ENCODE measurements at regions of chr1 and their contacts with region 1.

Region 1: GRCh38 chr1:46527474-46528296 is 23.8 kb downstream of the KNCN start:
- DNase-seq: peak; percentile 63 to 79 (median 72)
- H3K4me3 ChIP-seq: no peak overlapping the region
- H3K27ac ChIP-seq: no peak overlapping the region
- H3K4me1 ChIP-seq: peaks cover 0 to 8% (median 3%) of the 10 kb centered on the region in 4 experiments
- H3K27me3 ChIP-seq: peaks cover 0 to 60% (median 49%) of the 10 kb centered on the region in 5 experiments

Region 2: GRCh38 chr1:46442317-46443161 is 85.1 kb before region 1 on chr1:
- CTCF ChIA-PET with region 1: interaction called, 161 read pairs
- POLR2A ChIA-PET with region 1: no interaction called
- DNase-seq: peak; percentile 84 to 90 (median 89)
- H3K4me3 ChIP-seq: peak overlapping the region; percentile 33 to 86 (median 64)
- H3K27ac ChIP-seq: peak overlapping the region in 1 of 2 experiments; percentile 62
- H3K4me1 ChIP-seq: peaks cover 0 to 21% (median 12%) of the 10 kb centered on the region in 4 experiments
- H3K27me3 ChIP-seq: peaks cover 2 to 23% (median 12%) of the 10 kb centered on the region in 5 experiments

Region 3: DNA sequence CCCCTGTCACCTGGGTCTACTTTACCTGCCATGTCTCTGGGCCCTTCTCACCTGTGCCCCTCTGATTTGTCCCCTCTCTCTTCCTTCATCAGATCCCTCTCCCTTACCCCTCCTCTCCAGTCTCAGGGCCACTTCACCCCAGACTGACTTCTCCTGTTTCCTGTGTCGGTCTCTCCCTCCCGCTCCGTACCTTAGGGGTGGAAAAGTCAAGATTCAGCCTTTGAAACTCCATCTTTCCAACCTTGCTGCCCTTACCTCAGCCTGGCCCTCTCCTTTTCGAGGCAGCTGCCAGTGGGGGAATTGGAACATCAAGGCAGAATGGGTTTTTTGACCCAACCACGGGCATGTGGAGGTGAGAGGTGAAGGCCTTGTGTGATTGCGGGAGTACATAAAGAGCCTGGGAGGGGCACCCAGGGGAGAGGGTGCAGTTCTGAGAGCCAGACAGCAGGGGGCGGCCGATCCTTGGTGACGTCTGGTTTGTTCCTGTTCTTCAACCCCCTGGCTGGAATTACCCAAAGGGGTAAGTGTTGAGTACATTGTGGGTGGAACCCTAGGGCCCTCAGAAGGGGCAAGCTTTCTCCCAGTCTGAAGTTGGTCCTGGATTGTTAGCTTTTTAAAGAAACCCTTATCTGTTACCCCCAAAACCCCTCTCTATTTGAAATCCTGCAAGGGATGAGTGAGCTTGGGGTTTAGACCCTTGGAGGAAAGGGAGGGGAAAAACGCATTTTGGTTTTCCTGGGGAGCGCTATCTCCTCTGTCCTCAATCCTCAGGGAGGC is 50.3 kb before region 1 on chr1:
- CTCF ChIA-PET with region 1: interaction called, 100 read pairs
- POLR2A ChIA-PET with region 1: no interaction called
- DNase-seq: peak; percentile 81 to 89 (median 84)
- H3K4me3 ChIP-seq: no peak overlapping the region
- H3K27ac ChIP-seq: no peak overlapping the region
- H3K4me1 ChIP-seq: no peaks in the 10 kb centered on the region
- H3K27me3 ChIP-seq: peaks cover 0 to 50% (median 28%) of the 10 kb centered on the region in 5 experiments

Region 4: GRCh38 chr1:46489638-46490405 is 37.9 kb before region 1 on chr1 and contains the start of gene DMBX1:
- CTCF ChIA-PET with region 1: interaction called, 24 read pairs
- POLR2A ChIA-PET with region 1: no interaction called
- DNase-seq: peak in 2 of 3 donors; percentile 31 to 40
- H3K4me3 ChIP-seq: peak within 1 kb of the TSS in 5 of 7 experiments; percentile 8 to 50 (median 30)
- H3K27ac ChIP-seq: no peak within 1 kb of the TSS
- H3K4me1 ChIP-seq: peaks cover 0 to 28% (median 10%) of the 10 kb centered on the region in 4 experiments
- H3K27me3 ChIP-seq: peaks cover 16 to 100% (median 60%) of the 10 kb centered on the region in 5 experiments

Region 5: GRCh38 chr1:46595127-46595526 is 67.4 kb after region 1 on chr1:
- CTCF ChIA-PET with region 1: no interaction called
- POLR2A ChIA-PET with region 1: no interaction called
- DNase-seq: peak; percentile 55 to 73 (median 72)
- H3K4me3 ChIP-seq: peak overlapping the region in 2 of 7 experiments; percentile 8 to 49
- H3K27ac ChIP-seq: no peak overlapping the region
- H3K4me1 ChIP-seq: peaks cover 8 to 33% (median 16%) of the 10 kb centered on the region in 4 experiments
- H3K27me3 ChIP-seq: no peaks in the 10 kb centered on the region

Region 6: DNA sequence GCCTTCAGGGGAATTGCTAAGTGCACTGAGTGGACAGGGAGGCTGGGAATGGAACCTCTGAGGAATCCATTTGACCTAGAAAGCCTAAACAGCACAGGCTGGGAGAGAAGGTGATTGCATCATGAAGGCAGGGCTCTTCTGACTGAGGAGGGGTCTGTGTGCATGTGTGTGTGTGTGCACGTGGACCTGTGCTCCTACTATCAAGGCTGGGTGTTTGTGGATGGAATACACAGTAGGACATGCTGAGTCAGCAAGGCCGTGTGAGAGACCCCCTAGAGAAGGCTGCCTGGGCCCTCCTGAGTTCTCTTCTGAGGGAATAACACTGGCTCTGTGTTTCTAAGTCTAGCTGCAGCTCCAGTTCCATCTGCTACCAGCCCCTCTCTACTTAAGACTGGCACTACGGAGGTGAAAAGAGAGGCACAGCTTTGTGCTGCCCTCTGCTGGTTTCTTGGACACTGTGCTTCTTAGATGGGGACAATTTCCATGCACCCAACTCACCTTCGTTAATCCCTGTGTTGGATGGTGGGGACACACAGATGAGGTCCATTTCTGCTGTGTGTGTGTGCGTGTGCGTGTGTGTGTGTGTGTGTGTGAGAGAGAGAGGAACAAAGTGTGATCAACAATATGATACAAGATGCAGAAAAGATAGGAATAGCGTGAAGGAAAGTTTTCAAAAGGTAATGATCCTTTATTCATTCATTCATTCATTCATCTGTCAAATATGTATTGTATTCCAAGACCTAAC is 197.5 kb after region 1 on chr1:
- CTCF ChIA-PET with region 1: interaction called, 21 read pairs
- POLR2A ChIA-PET with region 1: interaction called, 4 read pairs
- DNase-seq: peak; percentile 86 to 94 (median 89)
- H3K4me3 ChIP-seq: no peak overlapping the region
- H3K27ac ChIP-seq: no peak overlapping the region
- H3K4me1 ChIP-seq: no peaks in the 10 kb centered on the region
- H3K27me3 ChIP-seq: peaks cover 0 to 9% (median 5%) of the 10 kb centered on the region in 5 experiments